Colonic mucosa (tissue), 4 donors: ENCODE measurements at regions of chr3 and their contacts with region 1.

Region 1: GRCh38 chr3:52339612-52340011 is 23.5 kb downstream of the DNAH1 start:
- DNase-seq: peak; percentile 56
- H3K4me3 ChIP-seq: no peak overlapping the region
- H3K27ac ChIP-seq: no peak overlapping the region
- H3K4me1 ChIP-seq: no peaks in the 10 kb centered on the region
- H3K27me3 ChIP-seq: no peaks in the 10 kb centered on the region
- CTCF ChIP-seq: peak; percentile 44

Region 2: DNA sequence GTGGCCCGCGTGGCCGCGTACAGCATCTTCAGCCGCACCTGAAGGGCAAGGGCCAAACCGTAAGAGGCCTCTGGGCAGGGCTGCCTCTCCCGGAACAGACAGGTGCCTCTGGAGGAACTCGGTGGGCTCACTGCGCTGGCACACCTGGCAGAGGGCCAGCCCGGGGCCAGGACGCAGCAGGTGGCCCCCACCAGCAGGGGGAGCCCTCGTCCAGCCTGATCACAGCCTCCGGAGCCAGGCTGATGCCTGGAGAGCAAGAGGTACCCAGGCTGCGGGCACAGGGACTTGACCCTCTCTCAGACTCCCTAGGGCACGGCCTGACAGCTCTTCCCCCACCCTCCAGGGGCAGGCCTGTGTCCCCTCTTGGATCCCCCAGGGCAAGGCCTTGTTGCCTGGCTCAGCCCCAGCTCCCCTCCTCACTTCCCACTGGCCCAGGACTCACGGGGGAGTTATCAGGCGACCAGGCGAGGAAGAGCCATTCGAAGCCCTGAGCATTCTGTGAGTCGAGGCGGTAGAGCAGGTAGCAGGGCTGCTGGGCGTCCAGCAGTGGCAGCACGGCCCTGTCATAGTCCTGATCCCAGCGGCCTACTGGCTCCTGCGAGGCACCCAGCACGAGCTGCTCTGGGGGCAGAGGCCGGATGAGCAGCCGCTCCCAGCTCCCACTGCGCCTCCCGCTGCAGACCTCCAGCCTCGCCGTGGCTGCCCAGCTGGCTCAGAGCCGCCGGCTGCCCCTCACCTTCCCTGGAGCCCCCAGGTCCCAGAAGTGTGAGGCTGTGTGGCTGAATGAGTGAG is 107.9 kb before region 1 on chr3:
- intact Hi-C with region 1: loop called (anchors 5 kb)
- DNase-seq: peak; percentile 84
- H3K4me3 ChIP-seq: no peak overlapping the region
- H3K27ac ChIP-seq: no peak overlapping the region
- H3K4me1 ChIP-seq: no peaks in the 10 kb centered on the region
- H3K27me3 ChIP-seq: no peaks in the 10 kb centered on the region
- CTCF ChIP-seq: peak; percentile 96

Region 3: GRCh38 chr3:52291508-52292181 is 48.0 kb before region 1 on chr3:
- intact Hi-C with region 1: loop called (anchors 2 kb)
- DNase-seq: peak; percentile 55
- H3K4me3 ChIP-seq: peak overlapping the region; percentile 25
- H3K27ac ChIP-seq: no peak overlapping the region
- H3K4me1 ChIP-seq: peaks cover 12% of the 10 kb centered on the region
- H3K27me3 ChIP-seq: no peaks in the 10 kb centered on the region
- CTCF ChIP-seq: peak; percentile 51